Colonic mucosa (tissue), 4 donors: ENCODE measurements at regions of chr10 and their contacts with region 1.

Region 1: GRCh38 chr10:80161331-80162083 is 29.0 kb downstream of the PLAC9 start:
- DNase-seq: no peak
- H3K4me3 ChIP-seq: no peak overlapping the region
- H3K27ac ChIP-seq: no peak overlapping the region
- H3K4me1 ChIP-seq: peaks cover 10% of the 10 kb centered on the region
- H3K27me3 ChIP-seq: no peaks in the 10 kb centered on the region
- CTCF ChIP-seq: no peak

Region 2: DNA sequence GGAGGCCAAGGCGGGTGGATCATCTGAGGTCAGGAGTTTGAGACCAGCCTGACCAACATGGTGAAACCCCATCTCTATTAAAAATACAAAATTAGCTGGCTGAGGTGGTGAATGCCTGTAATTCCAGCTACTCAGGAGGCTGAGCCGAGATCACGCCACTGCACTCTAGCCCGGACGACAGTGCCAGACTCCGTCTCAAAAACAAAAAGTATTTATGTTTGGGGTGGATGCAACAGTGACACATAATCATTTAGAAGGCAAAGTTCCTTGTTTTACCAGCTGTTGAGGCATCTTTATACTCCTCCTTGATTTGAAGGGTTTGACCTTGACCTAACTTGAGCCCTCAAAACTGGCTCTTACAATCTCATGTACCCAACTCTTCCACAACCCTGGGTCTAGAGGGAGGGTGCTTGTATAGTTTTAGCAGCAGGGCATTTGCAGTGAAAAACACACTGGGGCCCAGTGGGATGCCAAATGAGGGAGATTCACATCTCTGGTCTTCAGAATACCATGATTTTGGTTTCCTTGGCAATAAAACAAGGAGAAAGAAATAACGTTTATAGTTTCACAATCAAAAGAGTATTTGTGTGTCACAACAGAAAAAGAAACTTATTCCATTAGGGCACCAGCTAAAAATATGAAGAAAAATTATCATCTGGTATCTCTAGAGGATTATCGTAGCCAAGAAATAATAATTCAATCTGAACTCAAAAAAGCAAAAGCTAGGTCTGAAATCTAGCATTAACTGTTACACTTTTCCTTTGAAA is 97.2 kb before region 1 on chr10:
- intact Hi-C with region 1: no loop called
- DNase-seq: no peak
- H3K4me3 ChIP-seq: no peak overlapping the region
- H3K27ac ChIP-seq: no peak overlapping the region
- H3K4me1 ChIP-seq: no peaks in the 10 kb centered on the region
- H3K27me3 ChIP-seq: no peaks in the 10 kb centered on the region
- CTCF ChIP-seq: no peak

Region 3: GRCh38 chr10:80202934-80203834 is 41.7 kb after region 1 on chr10:
- intact Hi-C with region 1: loop called (anchors 5 kb)
- DNase-seq: peak; percentile 75
- H3K4me3 ChIP-seq: peak overlapping the region; percentile 88
- H3K27ac ChIP-seq: peak overlapping the region; percentile 99
- H3K4me1 ChIP-seq: peaks cover 53% of the 10 kb centered on the region
- H3K27me3 ChIP-seq: no peaks in the 10 kb centered on the region
- CTCF ChIP-seq: no peak